ENCODE measurements at regions of chr3 and their contacts with region 1.

Region 1: DNA sequence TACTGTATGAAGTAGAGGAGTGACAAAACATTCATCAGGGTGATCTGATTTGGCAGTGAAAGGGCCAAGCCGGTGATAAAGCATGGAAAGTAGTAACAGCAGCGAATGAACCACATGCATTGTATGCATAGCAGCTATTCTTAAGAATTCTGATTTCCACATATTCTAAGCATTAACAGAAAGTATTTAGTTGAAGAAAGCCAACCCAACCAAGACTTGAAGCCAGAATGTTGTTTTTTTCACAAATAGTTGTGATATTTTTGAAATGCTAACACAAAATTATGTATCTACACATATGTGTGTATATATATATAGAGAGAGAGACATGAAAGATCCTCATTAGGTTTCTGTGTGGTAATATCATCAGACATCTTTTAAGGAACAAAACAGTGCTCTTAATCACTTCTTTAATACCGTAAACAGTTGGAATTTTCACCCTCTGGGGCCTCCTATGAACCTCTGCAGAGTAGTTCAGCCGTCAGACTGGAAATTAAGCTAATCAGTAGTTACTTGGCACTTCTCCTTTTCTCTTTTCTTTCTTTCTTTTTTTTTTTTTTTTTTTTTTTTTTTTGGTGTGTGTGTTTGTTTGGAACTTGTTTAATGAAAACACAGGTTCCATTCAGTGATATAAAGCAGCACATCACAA is 139.6 kb downstream of the CMSS1 start:
- DNase-seq: no peak
- ATAC-seq: no peak
- H3K4me3 ChIP-seq: no peak overlapping the region
- H3K4me3 Mint-ChIP-seq: no peak overlapping the region
- H3K27ac ChIP-seq: no peak overlapping the region
- H3K27ac Mint-ChIP-seq: no peak overlapping the region
- H3K4me1 ChIP-seq: no peaks in the 10 kb centered on the region
- H3K4me1 Mint-ChIP-seq: no peaks in the 10 kb centered on the region
- H3K27me3 ChIP-seq: no peaks in the 10 kb centered on the region
- H3K27me3 Mint-ChIP-seq: no peaks in the 10 kb centered on the region
- CTCF ChIP-seq: no peak

Region 2: GRCh38 chr3:99134986-99135385 is 822.3 kb before region 1 on chr3:
- CTCF ChIA-PET with region 1: no interaction called
- POLR2A ChIA-PET with region 1: no interaction called
- intact Hi-C with region 1: no loop called
- DNase-seq: no peak
- ATAC-seq: no peak
- H3K4me3 ChIP-seq: no peak overlapping the region
- H3K4me3 Mint-ChIP-seq: no peak overlapping the region
- H3K27ac ChIP-seq: no peak overlapping the region
- H3K27ac Mint-ChIP-seq: no peak overlapping the region
- H3K4me1 ChIP-seq: no peaks in the 10 kb centered on the region
- H3K4me1 Mint-ChIP-seq: no peaks in the 10 kb centered on the region
- H3K27me3 ChIP-seq: no peaks in the 10 kb centered on the region
- H3K27me3 Mint-ChIP-seq: no peaks in the 10 kb centered on the region
- CTCF ChIP-seq: no peak

Region 3: GRCh38 chr3:99645277-99646106 is 311.8 kb before region 1 on chr3:
- CTCF ChIA-PET with region 1: no interaction called
- POLR2A ChIA-PET with region 1: no interaction called
- intact Hi-C with region 1: no loop called
- DNase-seq: no peak
- ATAC-seq: no peak
- H3K4me3 ChIP-seq: no peak overlapping the region
- H3K4me3 Mint-ChIP-seq: no peak overlapping the region
- H3K27ac ChIP-seq: no peak overlapping the region
- H3K27ac Mint-ChIP-seq: no peak overlapping the region
- H3K4me1 ChIP-seq: no peaks in the 10 kb centered on the region
- H3K4me1 Mint-ChIP-seq: no peaks in the 10 kb centered on the region
- H3K27me3 ChIP-seq: no peaks in the 10 kb centered on the region
- H3K27me3 Mint-ChIP-seq: peaks cover 15% of the 10 kb centered on the region
- CTCF ChIP-seq: no peak

Region 4: GRCh38 chr3:100226712-100227429 is 269.6 kb after region 1 on chr3:
- CTCF ChIA-PET with region 1: no interaction called
- POLR2A ChIA-PET with region 1: no interaction called
- intact Hi-C with region 1: no loop called
- DNase-seq: no peak
- ATAC-seq: no peak
- H3K4me3 ChIP-seq: no peak overlapping the region
- H3K4me3 Mint-ChIP-seq: no peak overlapping the region
- H3K27ac ChIP-seq: no peak overlapping the region
- H3K27ac Mint-ChIP-seq: no peak overlapping the region
- H3K4me1 ChIP-seq: no peaks in the 10 kb centered on the region
- H3K4me1 Mint-ChIP-seq: no peaks in the 10 kb centered on the region
- H3K27me3 ChIP-seq: no peaks in the 10 kb centered on the region
- H3K27me3 Mint-ChIP-seq: peaks cover 4% of the 10 kb centered on the region
- CTCF ChIP-seq: no peak

Region 5: DNA sequence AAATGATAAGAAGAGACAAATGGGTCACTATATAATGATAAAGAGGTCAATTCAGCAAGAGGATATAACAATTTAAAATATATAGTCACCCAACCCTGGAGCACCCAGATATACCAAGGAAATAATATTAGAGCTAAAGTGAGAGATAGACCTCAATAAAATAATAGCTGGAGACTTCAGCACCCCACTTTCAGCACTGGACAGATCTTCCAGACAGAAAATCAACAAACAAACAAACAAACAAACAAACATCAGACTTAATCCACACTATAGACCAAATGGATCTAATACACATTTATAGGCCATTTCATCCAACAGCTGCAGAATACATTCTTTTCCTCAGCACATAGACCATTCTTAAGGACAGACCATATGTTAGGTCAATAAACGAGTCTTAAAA is 1476.4 kb after region 1 on chr3:
- CTCF ChIA-PET with region 1: no interaction called
- POLR2A ChIA-PET with region 1: no interaction called
- intact Hi-C with region 1: loop called in 1 of 2 experiments (anchors 5 kb)
- DNase-seq: no peak
- ATAC-seq: no peak
- H3K4me3 ChIP-seq: no peak overlapping the region
- H3K4me3 Mint-ChIP-seq: no peak overlapping the region
- H3K27ac ChIP-seq: no peak overlapping the region
- H3K27ac Mint-ChIP-seq: no peak overlapping the region
- H3K4me1 ChIP-seq: no peaks in the 10 kb centered on the region
- H3K4me1 Mint-ChIP-seq: peaks cover 37% of the 10 kb centered on the region
- H3K27me3 ChIP-seq: no peaks in the 10 kb centered on the region
- H3K27me3 Mint-ChIP-seq: no peaks in the 10 kb centered on the region
- CTCF ChIP-seq: no peak

Measured in CD8-positive, alpha-beta T cell (primary cell).